Gastrocnemius medialis (tissue), 4 donors: ENCODE measurements at regions of chr17 and their contacts with region 1.

Region 1: GRCh38 chr17:3557751-3558583 is at the start of gene TRPV3:
- DNase-seq: peak; percentile 22 to 74
- ATAC-seq: peak; percentile 59 to 65
- H3K4me3 ChIP-seq: peak within 1 kb of the TSS in 1 of 4 donors; percentile 35
- H3K27ac ChIP-seq: peak within 1 kb of the TSS; percentile 31 to 70 (median 64)
- H3K4me1 ChIP-seq: peaks cover 3% of the 10 kb centered on the region in 2 donors
- H3K27me3 ChIP-seq: no peaks in the 10 kb centered on the region
- CTCF ChIP-seq: no peak
- POLR2A ChIP-seq: peak; percentile 35 to 50
- total RNA-seq, gene TRPV3: 1.3 to 3.8 (median 1.6) TPM

Region 2: GRCh38 chr17:3512505-3513171 is 45.3 kb before region 1 on chr17:
- in situ Hi-C with region 1: no loop called
- intact Hi-C with region 1: loop called (anchors 2 kb)
- DNase-seq: peak; percentile 79 to 84
- ATAC-seq: peak; percentile 97
- H3K4me3 ChIP-seq: peak overlapping the region; percentile 29 to 54 (median 36)
- H3K27ac ChIP-seq: peak overlapping the region; percentile 83 to 92 (median 88)
- H3K4me1 ChIP-seq: peaks cover 24 to 37% of the 10 kb centered on the region in 2 donors
- H3K27me3 ChIP-seq: no peaks in the 10 kb centered on the region
- CTCF ChIP-seq: no peak
- POLR2A ChIP-seq: peak; percentile 20 to 46

Region 3: DNA sequence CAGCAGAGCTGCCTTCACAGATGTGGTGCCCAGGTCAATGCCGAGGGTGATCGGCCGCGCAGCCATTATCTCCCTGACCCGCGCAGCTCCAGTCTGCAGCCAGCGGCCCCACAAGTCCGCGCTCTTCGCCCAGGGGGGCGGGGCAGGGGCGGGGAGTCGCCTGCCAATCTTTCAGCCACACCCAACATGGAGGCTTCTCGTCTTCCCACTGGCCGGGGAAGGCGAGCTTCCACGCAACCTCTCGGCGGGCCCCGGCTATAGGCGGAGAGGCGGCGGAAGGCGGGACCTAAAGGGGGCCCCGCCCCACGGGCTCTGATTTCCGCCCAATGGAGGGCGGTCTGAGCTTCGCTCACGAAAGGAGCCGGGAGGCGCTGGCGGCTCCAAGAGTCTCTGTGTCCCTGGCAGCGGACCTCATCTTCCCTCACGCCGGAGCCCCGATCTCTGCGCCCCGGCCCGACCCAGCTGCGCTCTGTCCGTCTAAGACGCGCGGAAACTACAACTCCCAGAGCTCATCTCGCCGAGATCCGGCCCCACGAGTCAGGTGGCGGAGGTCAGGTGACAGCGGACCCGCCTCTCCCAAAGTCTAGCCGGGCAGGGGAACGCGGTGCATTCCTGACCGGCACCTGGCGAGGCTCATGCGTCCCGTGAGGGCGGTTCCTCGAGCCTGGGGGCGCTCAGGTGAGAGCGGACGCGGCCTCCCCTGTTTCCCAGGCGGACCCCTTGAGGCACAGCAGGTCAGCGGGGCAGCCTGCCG is 78.4 kb after region 1 on chr17 and contains the starts of genes CTNS and SHPK:
- in situ Hi-C with region 1: no loop called
- intact Hi-C with region 1: no loop called
- DNase-seq: peak; percentile 96 to 97
- ATAC-seq: peak; percentile 89
- H3K4me3 ChIP-seq: peak within 1 kb of the TSS; percentile 82 to 100 (median 90)
- H3K27ac ChIP-seq: peak within 1 kb of the TSS; percentile 90 to 99 (median 96)
- H3K4me1 ChIP-seq: peaks cover 40 to 45% of the 10 kb centered on the region in 2 donors
- H3K27me3 ChIP-seq: no peaks in the 10 kb centered on the region
- CTCF ChIP-seq: peak in 1 of 5 experiments; percentile 17
- POLR2A ChIP-seq: peak; percentile 79 to 81
- total RNA-seq, gene CTNS: 15.0 to 141 (median 60.2) TPM
- total RNA-seq, gene SHPK: 4.1 to 4.7 (median 4.4) TPM